ENCODE measurements at regions of chr1 and their contacts with region 1.

Region 1: GRCh38 chr1:204257954-204258752 is 44.4 kb upstream of the GOLT1A start:
- DNase-seq: no peak
- H3K4me3 ChIP-seq: no peak overlapping the region
- CTCF ChIP-seq: peak; percentile 86

Region 2: GRCh38 chr1:204119236-204119635 is 138.9 kb before region 1 on chr1:
- CTCF ChIA-PET with region 1: no interaction called
- POLR2A ChIA-PET with region 1: no interaction called
- DNase-seq: no peak
- H3K4me3 ChIP-seq: no peak overlapping the region
- CTCF ChIP-seq: no peak

Region 3: DNA sequence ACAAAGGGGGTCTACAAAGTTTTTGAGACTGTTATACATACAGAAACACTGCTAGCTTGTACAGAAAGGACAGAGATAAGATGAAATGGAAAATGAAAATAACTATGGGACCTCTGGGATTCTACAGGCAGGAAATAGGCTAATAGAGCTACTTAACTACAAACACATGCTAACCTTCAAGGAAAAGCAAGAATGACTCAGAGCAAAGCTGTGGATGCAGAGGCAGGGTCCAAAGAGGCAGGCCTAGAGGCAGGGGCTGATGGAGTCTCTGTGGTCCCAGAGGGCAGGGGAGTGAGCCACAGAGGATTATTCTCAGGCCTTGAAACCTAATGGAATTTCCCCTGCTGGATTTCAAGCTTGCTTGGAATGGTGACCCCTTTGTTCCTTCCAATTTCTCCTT is 25.6 kb before region 1 on chr1:
- CTCF ChIA-PET with region 1: interaction called, 12 read pairs
- POLR2A ChIA-PET with region 1: no interaction called
- DNase-seq: no peak
- H3K4me3 ChIP-seq: no peak overlapping the region
- CTCF ChIP-seq: no peak

Region 4: DNA sequence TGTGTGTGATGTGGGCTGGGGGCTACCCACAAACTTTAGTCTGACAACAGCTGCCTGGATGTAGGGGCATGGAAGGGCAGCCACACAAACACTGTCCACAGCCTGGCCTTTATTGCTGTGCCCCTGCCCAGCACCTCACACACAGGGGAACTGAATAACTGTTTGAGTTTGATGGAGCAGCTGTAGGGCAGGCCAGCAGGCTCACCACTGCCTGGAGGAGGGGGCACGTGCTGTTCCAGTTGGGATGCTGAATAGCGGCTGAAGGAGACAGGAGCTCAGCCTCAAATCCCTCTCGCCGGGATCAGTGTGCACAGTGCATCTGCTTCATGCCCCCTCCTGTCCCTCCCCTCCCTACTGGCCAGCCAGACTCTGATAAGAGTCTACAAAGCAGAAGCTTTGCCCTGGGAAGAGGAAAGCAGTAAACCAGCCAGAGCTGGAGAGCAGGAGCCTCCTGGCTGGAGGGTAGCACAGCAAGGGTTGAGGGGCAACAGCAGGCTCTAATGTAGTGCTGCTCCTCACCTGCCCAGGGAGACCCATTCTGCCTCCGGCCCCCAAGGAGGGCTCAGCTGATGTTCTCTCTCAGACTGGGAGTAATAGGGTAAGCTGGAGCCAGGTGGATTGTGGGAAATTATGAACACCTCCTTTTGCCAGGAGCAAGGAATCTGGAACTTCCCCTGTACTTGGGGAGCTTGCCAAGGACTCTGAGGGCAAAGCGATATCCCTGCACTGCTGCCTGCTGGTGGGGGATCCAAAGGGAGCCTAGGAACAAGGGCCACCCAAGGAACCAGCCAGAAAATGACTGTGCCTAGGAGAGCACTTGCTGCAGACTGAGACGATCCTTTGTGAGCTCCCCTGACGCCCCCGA is 25.9 kb after region 1 on chr1:
- CTCF ChIA-PET with region 1: interaction called, 16 read pairs
- POLR2A ChIA-PET with region 1: interaction called, 3 read pairs
- DNase-seq: no peak
- H3K4me3 ChIP-seq: no peak overlapping the region
- CTCF ChIP-seq: no peak

Region 5: GRCh38 chr1:204323887-204324286 is 65.7 kb after region 1 on chr1:
- CTCF ChIA-PET with region 1: interaction called, 10 read pairs
- POLR2A ChIA-PET with region 1: no interaction called
- DNase-seq: no peak
- H3K4me3 ChIP-seq: no peak overlapping the region
- CTCF ChIP-seq: no peak

Region 6: GRCh38 chr1:204350857-204351573 is 92.9 kb after region 1 on chr1:
- CTCF ChIA-PET with region 1: interaction called, 34 read pairs
- POLR2A ChIA-PET with region 1: no interaction called
- DNase-seq: no peak
- H3K4me3 ChIP-seq: peak overlapping the region; percentile 45
- CTCF ChIP-seq: no peak

Measured in AG04449 (cell line).